MCF 10A (cell line): ENCODE measurements at regions of chr20 and their contacts with region 1.

Region 1: DNA sequence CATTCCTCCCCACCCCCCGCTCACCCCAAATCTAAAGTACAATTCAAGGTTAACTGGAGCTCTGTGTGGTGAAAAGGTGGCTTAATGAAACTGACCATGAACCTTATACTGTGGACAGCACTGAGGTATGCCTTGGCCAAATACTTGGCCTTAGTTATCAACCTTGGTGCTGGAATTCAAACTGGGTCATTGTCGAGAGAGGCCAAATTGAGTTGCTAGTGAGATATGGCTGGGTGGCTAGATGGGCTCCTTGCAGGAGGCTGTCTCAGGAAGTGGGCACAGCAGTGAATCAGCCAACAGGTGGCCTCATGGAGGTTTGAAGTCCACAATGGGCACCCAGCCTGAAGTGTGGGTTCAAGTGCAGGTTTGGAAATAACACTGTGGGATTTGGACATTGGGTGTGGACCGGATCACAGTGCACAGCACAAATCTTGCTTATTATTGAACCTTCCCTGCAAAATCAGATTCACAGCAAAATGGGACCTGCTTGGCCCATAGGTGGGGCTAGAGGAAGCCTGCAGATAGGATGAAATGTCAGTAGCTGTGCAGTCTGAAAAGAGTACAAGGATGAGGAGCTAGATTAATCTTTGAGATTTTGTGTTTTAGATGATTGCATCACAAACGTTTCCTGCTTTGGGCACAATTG is 5.6 kb upstream of the BTBD3 start:
- DNase-seq: peak; percentile 41
- H3K4me3 Mint-ChIP-seq: no peak overlapping the region
- H3K27ac Mint-ChIP-seq: no peak overlapping the region
- H3K4me1 Mint-ChIP-seq: peaks cover 26% of the 10 kb centered on the region
- H3K27me3 Mint-ChIP-seq: no peaks in the 10 kb centered on the region
- CTCF ChIP-seq: peak; percentile 27

Region 2: GRCh38 chr20:11901127-11901526 is 11.0 kb before region 1 on chr20:
- CTCF ChIA-PET with region 1: interaction called, 17 read pairs
- POLR2A ChIA-PET with region 1: interaction called, 5 read pairs
- intact Hi-C with region 1: no loop called
- DNase-seq: peak; percentile 32
- H3K4me3 Mint-ChIP-seq: no peak overlapping the region
- H3K27ac Mint-ChIP-seq: no peak overlapping the region
- H3K4me1 Mint-ChIP-seq: peaks cover 34% of the 10 kb centered on the region
- H3K27me3 Mint-ChIP-seq: no peaks in the 10 kb centered on the region
- CTCF ChIP-seq: no peak

Region 3: DNA sequence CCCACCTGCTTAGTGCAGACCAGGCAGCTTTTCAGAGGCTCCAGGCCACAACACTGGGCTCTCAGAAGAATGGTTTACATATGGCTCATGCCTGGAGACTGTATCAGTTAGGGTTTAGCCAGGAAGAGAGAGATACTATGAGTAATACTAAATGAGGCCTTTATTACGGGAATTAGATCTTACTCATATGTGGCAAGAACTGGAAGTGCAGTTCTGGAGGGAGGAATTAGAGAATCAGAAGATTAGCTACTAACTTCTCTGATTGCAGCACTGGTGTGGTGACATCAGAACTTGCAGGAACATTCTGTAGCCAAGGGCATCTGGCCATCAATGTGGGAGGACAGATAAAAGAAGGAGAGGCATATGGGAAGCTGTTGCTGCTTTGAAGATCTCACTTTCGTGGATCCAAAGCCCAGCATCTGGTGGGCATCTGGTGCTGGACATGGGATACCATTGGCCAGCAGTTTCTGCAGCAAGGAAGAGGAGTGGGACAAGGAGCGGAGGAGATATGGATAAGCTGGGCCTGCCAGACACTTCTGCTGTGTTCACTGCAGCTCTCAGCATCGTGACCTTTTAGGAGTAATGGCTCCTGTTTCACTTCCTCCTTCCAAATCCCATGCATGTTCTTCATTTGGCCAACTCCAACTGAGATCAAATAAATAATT is 254.0 kb after region 1 on chr20:
- CTCF ChIA-PET with region 1: no interaction called
- POLR2A ChIA-PET with region 1: no interaction called
- intact Hi-C with region 1: no loop called
- DNase-seq: peak; percentile 87
- H3K4me3 Mint-ChIP-seq: no peak overlapping the region
- H3K27ac Mint-ChIP-seq: no peak overlapping the region
- H3K4me1 Mint-ChIP-seq: no peaks in the 10 kb centered on the region
- H3K27me3 Mint-ChIP-seq: no peaks in the 10 kb centered on the region
- CTCF ChIP-seq: no peak